ENCODE measurements at regions of chr20 and their contacts with region 1.

Region 1: GRCh38 chr20:11926292-11926998 is 8.8 kb downstream of the BTBD3 start:
- DNase-seq: no peak
- ATAC-seq: no peak
- H3K4me3 ChIP-seq: no peak overlapping the region
- H3K27ac ChIP-seq: no peak overlapping the region
- H3K4me1 ChIP-seq: no peaks in the 10 kb centered on the region
- H3K27me3 ChIP-seq: no peaks in the 10 kb centered on the region
- CTCF ChIP-seq: no peak
- EP300 ChIP-seq: no peak
- POLR2A ChIP-seq: no peak
- RAD21 ChIP-seq: no peak

Region 2: DNA sequence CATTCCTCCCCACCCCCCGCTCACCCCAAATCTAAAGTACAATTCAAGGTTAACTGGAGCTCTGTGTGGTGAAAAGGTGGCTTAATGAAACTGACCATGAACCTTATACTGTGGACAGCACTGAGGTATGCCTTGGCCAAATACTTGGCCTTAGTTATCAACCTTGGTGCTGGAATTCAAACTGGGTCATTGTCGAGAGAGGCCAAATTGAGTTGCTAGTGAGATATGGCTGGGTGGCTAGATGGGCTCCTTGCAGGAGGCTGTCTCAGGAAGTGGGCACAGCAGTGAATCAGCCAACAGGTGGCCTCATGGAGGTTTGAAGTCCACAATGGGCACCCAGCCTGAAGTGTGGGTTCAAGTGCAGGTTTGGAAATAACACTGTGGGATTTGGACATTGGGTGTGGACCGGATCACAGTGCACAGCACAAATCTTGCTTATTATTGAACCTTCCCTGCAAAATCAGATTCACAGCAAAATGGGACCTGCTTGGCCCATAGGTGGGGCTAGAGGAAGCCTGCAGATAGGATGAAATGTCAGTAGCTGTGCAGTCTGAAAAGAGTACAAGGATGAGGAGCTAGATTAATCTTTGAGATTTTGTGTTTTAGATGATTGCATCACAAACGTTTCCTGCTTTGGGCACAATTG is 14.3 kb before region 1 on chr20:
- CTCF ChIA-PET with region 1: no interaction called
- POLR2A ChIA-PET with region 1: no interaction called
- in situ Hi-C with region 1: no loop called
- intact Hi-C with region 1: loop called (anchors 2 kb)
- DNase-seq: peak; percentile 30
- ATAC-seq: peak; percentile 91
- H3K4me3 ChIP-seq: no peak overlapping the region
- H3K27ac ChIP-seq: no peak overlapping the region
- H3K4me1 ChIP-seq: peaks cover 17% of the 10 kb centered on the region
- H3K27me3 ChIP-seq: no peaks in the 10 kb centered on the region
- CTCF ChIP-seq: peak; percentile 50; the same call in 1 of the 2 replicates
- EP300 ChIP-seq: no peak
- POLR2A ChIP-seq: no peak
- RAD21 ChIP-seq: no peak